WTC11 (cell line): ENCODE measurements at regions of chr2 and their contacts with region 1.

Region 1: GRCh38 chr2:120589771-120590608 is 145.7 kb upstream of the GLI2 start:
- DNase-seq: no peak
- ATAC-seq: no peak
- H3K4me3 Mint-ChIP-seq: no peak overlapping the region
- H3K27ac Mint-ChIP-seq: no peak overlapping the region
- H3K4me1 Mint-ChIP-seq: peaks cover 53% of the 10 kb centered on the region
- H3K27me3 Mint-ChIP-seq: peaks cover 74% of the 10 kb centered on the region
- CTCF ChIP-seq: no peak

Region 2: DNA sequence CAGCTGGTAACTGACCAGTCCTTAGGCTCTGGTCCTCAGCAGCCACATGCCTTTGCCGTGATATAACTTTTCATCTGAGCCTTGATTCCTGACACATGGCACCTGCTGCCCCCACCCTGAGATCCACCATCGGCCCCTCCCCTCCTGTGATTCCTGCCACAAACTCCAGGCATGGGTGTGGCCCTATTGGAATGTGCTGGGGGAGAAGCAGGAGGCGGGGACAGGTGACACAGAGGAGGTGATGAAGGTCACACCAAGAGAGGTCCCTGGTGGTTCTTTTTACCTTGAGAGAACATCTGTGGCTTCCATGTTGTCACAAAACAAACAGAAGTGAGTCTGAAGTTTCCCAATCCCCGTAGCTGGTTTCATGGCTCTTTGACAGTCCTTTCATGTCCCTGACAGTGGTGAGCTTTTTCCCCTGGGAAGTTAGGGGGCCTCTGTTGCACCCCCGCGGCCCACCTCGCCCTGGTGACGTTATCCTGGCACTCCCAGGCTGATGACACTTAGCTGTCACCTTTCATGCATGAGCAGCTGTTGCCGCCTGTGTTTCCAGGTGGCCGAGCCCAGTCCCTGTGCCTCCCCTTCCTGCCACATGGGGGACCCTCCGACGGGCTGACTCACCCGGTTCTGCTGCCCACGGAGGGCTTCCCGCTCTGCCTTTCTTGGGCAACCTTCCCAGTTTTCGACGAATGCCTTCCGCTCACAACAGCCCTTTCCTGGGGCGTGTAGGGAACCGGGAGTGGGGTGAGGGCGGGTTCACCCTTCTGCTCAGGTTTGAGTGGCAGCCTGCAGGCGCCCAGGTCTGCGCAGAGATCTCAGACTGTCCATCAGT is 79.3 kb after region 1 on chr2:
- CTCF ChIA-PET with region 1: interaction called, 12 read pairs
- POLR2A ChIA-PET with region 1: no interaction called
- DNase-seq: peak; percentile 75
- ATAC-seq: peak; percentile 94
- H3K4me3 Mint-ChIP-seq: no peak overlapping the region
- H3K27ac Mint-ChIP-seq: no peak overlapping the region
- H3K4me1 Mint-ChIP-seq: 0 out of 2 replicates have a peak, but pooled peaks cover 3% of the 10 kb centered on the region
- H3K27me3 Mint-ChIP-seq: peaks cover 67% of the 10 kb centered on the region
- CTCF ChIP-seq: peak; percentile 46; the same call in 1 of the 2 replicates

Region 3: GRCh38 chr2:120758181-120759144 is 168.5 kb after region 1 on chr2:
- CTCF ChIA-PET with region 1: no interaction called
- POLR2A ChIA-PET with region 1: no interaction called
- DNase-seq: peak; percentile 21
- ATAC-seq: peak; percentile 78
- H3K4me3 Mint-ChIP-seq: no peak overlapping the region
- H3K27ac Mint-ChIP-seq: peak overlapping the region; percentile 86
- H3K4me1 Mint-ChIP-seq: peaks cover 68% of the 10 kb centered on the region
- H3K27me3 Mint-ChIP-seq: no peaks in the 10 kb centered on the region
- CTCF ChIP-seq: no peak